ENCODE measurements at regions of chr1 and their contacts with region 1.

Region 1: GRCh38 chr1:56578963-56579875 is at the start of gene PLPP3:
- DNase-seq: peak; percentile 82 to 86 (median 84)
- ATAC-seq: peak; percentile 91
- H3K4me3 ChIP-seq: peak within 1 kb of the TSS; percentile 60
- H3K4me1 ChIP-seq: no peaks in the 10 kb centered on the region
- CTCF ChIP-seq: no peak
- total RNA-seq, gene PLPP3: 25.3 to 80.5 (median 42.3) TPM

Region 2: DNA sequence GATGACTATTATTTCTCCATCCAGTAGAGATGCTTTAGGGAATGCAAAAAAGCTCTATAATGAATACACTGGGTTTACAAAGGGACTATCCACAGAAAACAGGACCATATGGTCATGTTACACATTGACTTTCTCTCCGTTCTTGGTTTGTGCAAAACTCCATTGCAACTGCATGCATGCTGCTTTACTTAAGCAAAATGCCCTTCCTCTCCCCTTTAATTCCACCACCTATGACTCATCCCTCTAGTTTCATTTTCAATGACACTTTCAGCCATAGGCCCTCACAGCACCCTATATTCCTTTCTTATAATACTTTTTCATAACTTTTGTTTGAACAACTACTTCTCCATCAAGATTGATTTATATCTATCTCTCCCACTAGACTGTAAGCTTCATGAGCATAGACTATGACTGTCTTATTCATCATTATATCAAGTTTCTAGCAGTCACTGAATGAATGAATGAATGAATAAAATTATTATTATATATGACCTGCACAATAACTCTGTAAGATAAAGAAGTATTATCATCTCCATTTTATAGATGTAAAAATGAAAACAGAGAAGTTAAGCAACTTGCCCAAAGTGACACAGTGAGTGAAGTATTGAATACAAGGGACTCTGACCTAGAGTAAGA is 248.7 kb before region 1 on chr1:
- intact Hi-C with region 1: no loop called
- DNase-seq: no peak
- ATAC-seq: no peak
- H3K4me3 ChIP-seq: no peak overlapping the region
- H3K4me1 ChIP-seq: no peaks in the 10 kb centered on the region
- CTCF ChIP-seq: no peak

Region 3: GRCh38 chr1:56411484-56412180 is 167.6 kb before region 1 on chr1:
- intact Hi-C with region 1: loop called in 1 of 2 experiments (anchors 10 kb)
- DNase-seq: no peak
- ATAC-seq: no peak
- H3K4me3 ChIP-seq: no peak overlapping the region
- H3K4me1 ChIP-seq: no peaks in the 10 kb centered on the region
- CTCF ChIP-seq: no peak